Sigmoid colon (tissue), 7 donors: ENCODE measurements at regions of chr2 and their contacts with region 1.

Region 1: GRCh38 chr2:206159346-206160124 is at the starts of genes EEF1B2 and NDUFS1:
- DNase-seq: peak; percentile 98
- H3K4me3 ChIP-seq: peak within 1 kb of the TSS; percentile 75 to 94 (median 92)
- H3K27ac ChIP-seq: peak within 1 kb of the TSS; percentile 90 to 97 (median 96)
- H3K4me1 ChIP-seq: peaks cover 0 to 37% (median 33%) of the 10 kb centered on the region in 4 donors
- H3K27me3 ChIP-seq: no peaks in the 10 kb centered on the region
- CTCF ChIP-seq: no peak
- EP300 ChIP-seq: peak in 2 of 4 donors; percentile 35 to 40
- POLR2A ChIP-seq: peak; percentile 35 to 47
- total RNA-seq, gene EEF1B2: 227 to 680 (median 448) TPM
- total RNA-seq, gene NDUFS1: 69.5 to 109 (median 97.1) TPM

Region 2: GRCh38 chr2:206085742-206086445 is 73.6 kb before region 1 on chr2 and contains the start of gene INO80D:
- intact Hi-C with region 1: loop called (anchors 5 kb)
- DNase-seq: peak; percentile 90
- H3K4me3 ChIP-seq: peak within 1 kb of the TSS; percentile 71 to 88 (median 84)
- H3K27ac ChIP-seq: peak within 1 kb of the TSS; percentile 94 to 99 (median 96)
- H3K4me1 ChIP-seq: peaks cover 0 to 41% (median 28%) of the 10 kb centered on the region in 4 donors
- H3K27me3 ChIP-seq: no peaks in the 10 kb centered on the region
- CTCF ChIP-seq: peak; percentile 10 to 71 (median 57)
- EP300 ChIP-seq: no peak
- POLR2A ChIP-seq: peak; percentile 64 to 66
- total RNA-seq, gene INO80D: 13.0 to 19.8 (median 17.3) TPM

Region 3: DNA sequence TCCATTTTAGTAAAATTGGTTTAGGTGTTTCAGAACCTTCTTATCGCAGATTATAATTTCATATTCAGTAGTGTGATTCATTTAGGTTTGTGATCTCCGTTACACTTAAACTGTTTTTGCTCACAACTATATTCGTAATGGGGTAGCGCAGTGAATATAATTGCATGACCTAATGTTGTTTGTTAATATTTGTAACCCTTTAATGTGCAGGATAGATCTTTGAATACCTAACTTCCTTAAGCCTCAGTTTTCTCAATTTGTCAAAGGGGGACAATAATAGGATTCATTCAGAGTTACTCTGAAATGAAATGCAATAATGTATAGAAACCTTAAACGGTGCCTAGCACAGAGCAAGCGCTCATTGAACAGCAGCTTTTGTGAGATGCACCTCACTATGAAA is 114.4 kb after region 1 on chr2:
- intact Hi-C with region 1: loop called (anchors 2 kb)
- DNase-seq: no peak
- H3K4me3 ChIP-seq: peak overlapping the region in 3 of 4 donors; percentile 65 to 76 (median 76)
- H3K27ac ChIP-seq: peak overlapping the region in 2 of 4 donors; percentile 70 to 80
- H3K4me1 ChIP-seq: peaks cover 0 to 27% (median 14%) of the 10 kb centered on the region in 4 donors
- H3K27me3 ChIP-seq: peaks cover 13 to 96% (median 37%) of the 10 kb centered on the region in 3 donors
- CTCF ChIP-seq: no peak
- EP300 ChIP-seq: no peak
- POLR2A ChIP-seq: no peak